Cardiac septum (tissue), 1 donor: ENCODE measurements at regions of chr2 and their contacts with region 1.

Region 1: GRCh38 chr2:191291471-191291870 is 46.3 kb downstream of the MYO1B start:
- DNase-seq: no peak

Region 2: GRCh38 chr2:190996338-190996946 is 295.0 kb before region 1 on chr2:
- intact Hi-C with region 1: no loop called
- DNase-seq: no peak

Region 3: GRCh38 chr2:191250400-191250799 is 41.1 kb before region 1 on chr2:
- intact Hi-C with region 1: loop called (anchors 5 kb)
- DNase-seq: no peak

Region 4: GRCh38 chr2:191345788-191346187 is 54.3 kb after region 1 on chr2:
- intact Hi-C with region 1: no loop called
- DNase-seq: no peak